Cardiac septum (tissue), 1 donor: ENCODE measurements at regions of chr17 and their contacts with region 1.

Region 1: GRCh38 chr17:10115071-10115539 is 83.3 kb downstream of the GAS7 start:
- DNase-seq: peak; percentile 96

Region 2: DNA sequence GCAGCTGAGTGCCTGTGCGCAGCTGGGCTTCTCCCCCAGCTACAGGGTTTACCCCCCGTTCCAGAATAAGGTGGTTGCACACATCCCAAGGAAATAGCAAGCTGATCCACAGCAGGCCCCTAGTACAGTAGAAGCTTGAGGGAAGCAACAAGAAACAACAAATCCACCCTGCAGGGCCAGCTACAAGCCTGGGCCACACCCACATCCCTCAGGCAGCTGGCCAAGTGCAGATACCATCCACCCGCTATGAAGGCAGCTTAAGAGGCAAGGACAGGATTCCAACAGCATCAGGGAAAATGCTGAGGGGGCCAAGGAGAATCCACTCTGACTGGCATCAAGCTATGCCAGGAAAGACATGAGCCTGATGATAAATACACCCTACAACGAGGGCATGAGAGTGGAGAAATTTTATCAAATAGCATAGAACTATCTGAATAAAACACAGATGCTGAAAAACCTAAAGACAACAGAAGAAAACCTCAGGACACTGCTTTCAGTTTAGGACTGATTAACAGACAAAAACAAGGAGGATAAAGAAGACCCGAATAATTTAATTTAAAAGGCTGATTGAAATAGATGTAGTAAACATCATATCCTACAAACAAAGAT is 143.0 kb before region 1 on chr17:
- intact Hi-C with region 1: loop called (anchors 5 kb)
- DNase-seq: peak; percentile 78

Region 3: GRCh38 chr17:10013365-10014221 is 101.5 kb before region 1 on chr17:
- intact Hi-C with region 1: no loop called
- DNase-seq: no peak

Region 4: DNA sequence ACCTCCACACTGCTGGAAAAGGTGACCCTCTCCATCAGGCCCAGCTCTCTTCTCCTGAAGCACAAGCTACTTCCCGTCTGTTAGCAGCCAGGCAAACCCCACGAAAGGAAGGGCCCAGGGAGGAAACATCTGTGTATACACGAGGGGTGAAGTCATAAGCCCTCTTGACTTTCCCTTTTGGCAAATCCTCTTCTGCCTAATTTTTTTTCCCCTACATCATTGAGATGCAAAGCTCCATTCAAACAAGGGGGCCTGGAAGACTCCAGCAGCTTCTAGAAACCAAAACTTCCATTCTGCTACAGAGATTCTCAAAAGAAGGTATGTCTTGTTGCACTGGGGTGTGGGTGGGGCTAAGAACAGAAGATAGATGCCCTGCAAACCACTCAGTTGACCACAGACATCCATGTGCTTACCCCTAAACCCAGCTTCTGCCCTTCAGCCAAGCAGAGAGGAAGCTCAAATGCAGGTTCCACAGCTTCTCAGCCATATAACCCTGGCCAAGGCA is 64.5 kb before region 1 on chr17:
- intact Hi-C with region 1: loop called (anchors 5 kb)
- DNase-seq: no peak

Region 5: DNA sequence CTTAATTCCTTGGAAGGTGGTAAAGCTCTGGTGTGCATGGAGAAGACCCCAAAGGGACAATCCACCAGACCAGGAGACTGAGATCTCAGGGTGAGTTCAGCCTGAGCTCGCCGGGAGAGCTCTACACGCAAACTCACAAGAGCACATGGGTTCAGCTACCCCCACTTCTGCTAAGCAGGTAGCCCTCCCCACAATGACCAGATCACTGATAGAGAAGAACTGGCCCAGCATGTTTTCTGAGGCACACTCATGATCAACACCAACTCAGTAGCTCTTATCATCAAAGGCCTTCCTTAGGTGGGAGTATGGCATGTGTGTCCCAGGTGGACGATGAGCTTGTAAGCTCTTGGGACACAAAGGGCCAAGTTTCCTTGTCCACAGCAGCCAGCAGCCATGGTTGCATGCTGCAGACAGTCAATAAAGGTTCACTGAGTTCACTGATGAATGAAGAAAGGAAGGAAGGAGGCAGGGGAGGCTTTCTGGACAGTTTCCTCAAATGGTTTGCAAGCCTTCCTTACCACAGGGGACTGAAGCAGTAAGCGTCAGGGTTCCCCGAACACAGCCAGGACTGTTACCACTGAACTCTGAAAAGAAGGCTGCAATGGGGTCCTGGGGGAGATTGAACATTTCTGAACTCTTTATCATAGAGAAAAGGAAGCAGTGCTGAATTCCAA is 27.9 kb before region 1 on chr17:
- intact Hi-C with region 1: no loop called
- DNase-seq: no peak

Region 6: GRCh38 chr17:10172241-10172741 is 57.2 kb after region 1 on chr17:
- intact Hi-C with region 1: no loop called
- DNase-seq: no peak

Region 7: GRCh38 chr17:10295728-10296343 is 180.7 kb after region 1 on chr17:
- intact Hi-C with region 1: loop called (anchors 10 kb)
- DNase-seq: no peak